Transverse colon (tissue), 4 donors: ENCODE measurements at regions of chr6 and their contacts with region 1.

Region 1: DNA sequence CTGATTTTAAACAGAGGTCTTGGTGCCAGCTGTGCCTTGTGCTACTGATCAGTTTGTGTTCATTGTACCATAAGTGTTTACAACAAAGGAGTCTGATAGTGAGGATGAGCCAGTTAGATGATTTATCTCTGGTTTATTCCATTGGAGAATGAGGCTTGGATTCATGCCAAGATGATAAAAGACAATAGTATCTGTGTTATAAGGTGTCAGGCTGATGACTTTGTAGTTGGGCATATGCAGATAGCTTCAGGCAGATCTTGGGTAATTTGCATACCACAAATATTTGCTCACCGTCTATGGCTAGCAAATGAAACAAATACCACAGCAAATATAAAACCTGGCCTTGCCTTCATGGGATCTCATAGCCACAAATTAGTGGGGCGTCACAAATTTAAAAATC is 43.3 kb upstream of the PHACTR2 start:
- DNase-seq: no peak
- H3K4me3 ChIP-seq: no peak overlapping the region
- H3K27ac ChIP-seq: no peak overlapping the region
- H3K4me1 ChIP-seq: no peaks in the 10 kb centered on the region
- H3K27me3 ChIP-seq: no peaks in the 10 kb centered on the region
- CTCF ChIP-seq: no peak
- EP300 ChIP-seq: no peak
- POLR2A ChIP-seq: no peak

Region 2: DNA sequence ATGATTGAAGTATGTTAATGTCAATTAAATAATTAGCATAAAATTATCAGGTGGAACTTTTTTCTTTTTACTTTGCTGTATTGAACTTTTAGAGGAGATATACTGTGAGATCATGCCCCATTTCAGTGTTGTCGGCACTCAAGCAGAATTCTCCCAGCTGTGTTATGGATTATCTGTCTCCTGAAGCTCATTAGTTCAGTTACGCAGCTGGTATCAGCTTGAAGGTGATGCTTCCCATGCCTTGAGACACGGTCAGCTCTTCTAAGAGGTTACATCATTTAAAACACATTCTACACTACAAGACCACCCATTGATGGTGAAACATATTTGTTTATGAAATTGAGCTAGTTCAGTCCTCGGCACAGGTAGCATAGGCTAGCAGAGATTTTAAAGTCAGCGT is 25.6 kb before region 1 on chr6:
- in situ Hi-C with region 1: no loop called
- intact Hi-C with region 1: loop called (anchors 1 kb)
- DNase-seq: no peak
- H3K4me3 ChIP-seq: no peak overlapping the region
- H3K27ac ChIP-seq: no peak overlapping the region
- H3K4me1 ChIP-seq: no peaks in the 10 kb centered on the region
- H3K27me3 ChIP-seq: no peaks in the 10 kb centered on the region
- CTCF ChIP-seq: no peak
- EP300 ChIP-seq: no peak
- POLR2A ChIP-seq: no peak

Region 3: DNA sequence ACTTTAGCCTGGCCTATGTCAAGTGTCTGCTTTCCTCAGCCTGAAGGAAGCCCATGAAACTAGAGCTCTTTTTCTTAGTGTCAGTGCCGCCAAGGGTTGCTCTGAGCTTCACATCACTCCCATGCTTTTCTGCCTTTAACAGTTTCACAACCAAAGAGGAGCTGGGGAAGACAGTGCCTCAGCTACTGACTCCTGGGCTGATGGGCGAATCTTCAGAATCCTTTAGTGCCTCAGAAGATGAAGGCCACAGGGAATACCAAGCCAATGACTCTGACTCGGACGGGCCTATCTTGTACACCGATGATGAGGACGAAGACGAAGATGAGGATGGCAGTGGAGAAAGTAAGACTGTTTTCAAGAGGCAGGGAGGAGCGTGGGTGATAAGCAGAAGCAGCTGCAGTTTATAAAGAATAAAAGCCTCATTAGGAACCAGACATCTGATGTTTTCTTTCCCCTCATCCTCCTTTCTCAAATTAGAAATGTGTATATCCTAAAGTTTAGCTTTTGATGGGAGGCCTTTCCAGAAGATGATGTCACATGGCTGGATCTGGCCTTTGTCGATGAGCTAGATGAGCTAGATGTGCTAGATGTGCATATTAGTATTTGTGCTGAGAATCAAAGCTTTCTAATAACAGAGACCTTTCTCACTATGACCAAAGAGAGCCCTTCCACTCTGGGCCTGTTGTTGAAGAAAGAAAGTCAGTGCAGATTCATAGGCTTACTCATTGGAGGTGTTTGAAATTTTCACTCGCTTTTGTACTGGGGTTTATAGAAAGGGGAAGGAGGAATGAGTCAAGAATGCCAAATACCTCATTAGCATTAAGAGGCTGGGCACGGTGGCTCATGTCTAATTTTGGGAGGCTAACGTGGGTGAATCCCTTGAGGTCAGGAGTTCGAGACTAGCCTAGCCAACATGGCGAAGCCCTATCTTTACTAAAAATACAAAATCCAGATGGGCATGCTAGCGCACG is 137.9 kb after region 1 on chr6:
- in situ Hi-C with region 1: no loop called
- intact Hi-C with region 1: no loop called
- DNase-seq: no peak
- H3K4me3 ChIP-seq: no peak overlapping the region
- H3K27ac ChIP-seq: peak overlapping the region; percentile 42 to 56 (median 55)
- H3K4me1 ChIP-seq: peaks cover 3 to 25% (median 10%) of the 10 kb centered on the region in 4 donors
- H3K27me3 ChIP-seq: no peaks in the 10 kb centered on the region
- CTCF ChIP-seq: no peak
- EP300 ChIP-seq: no peak
- POLR2A ChIP-seq: no peak